IMR-90 (cell line): ENCODE measurements at regions of chr10 and their contacts with region 1.

Region 1: DNA sequence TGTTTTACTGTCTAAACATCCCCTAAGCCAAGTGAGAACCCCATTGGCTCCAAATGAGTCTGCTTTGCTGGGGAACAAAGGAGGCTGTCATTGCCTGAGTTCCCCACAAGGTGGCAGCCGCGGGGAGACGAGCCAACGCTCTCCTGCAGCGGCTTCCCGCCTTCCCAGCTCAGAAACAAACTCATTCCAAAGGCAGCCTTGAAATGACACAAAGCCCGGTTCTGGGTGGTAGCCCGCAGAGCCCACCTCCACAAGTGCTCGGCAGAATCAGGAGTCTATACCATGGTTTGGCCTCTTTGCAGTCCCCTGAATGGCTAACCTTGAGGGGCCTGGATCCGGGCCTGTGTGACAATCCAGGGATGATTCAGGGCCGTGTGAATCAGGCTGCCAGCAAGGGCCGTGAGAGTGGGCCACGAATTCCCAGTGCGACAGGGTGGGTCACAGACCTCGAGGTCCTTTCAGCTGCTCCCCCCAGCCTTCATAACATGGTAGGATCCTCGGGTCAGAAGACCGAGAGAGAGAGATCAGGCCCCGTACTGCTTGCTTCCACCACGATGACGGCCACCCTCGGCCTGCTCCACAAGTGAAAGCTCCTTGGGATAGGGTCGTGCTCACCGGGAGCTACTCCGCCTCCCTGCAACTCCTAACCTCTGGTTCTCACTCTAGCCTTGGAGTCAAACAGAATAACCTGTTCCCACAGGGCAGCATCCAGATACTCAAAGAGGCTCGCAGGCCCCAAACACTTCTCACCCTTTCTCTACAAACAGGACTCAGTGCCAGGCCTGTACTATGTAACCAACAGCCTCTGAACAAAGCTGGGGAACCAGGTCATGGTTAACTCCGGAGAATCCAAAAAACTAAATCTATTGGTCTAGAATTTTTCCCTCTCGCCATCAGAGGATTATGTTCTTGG is 79.6 kb downstream of the DLG5 start:
- DNase-seq: peak; percentile 66
- ATAC-seq: peak; percentile 88
- H3K4me3 ChIP-seq: no peak overlapping the region
- H3K27ac ChIP-seq: no peak overlapping the region; the same call in 1 of the 2 replicates
- H3K4me1 ChIP-seq: peaks cover 20% of the 10 kb centered on the region
- H3K27me3 ChIP-seq: no peaks in the 10 kb centered on the region
- CTCF ChIP-seq: peak; percentile 89
- POLR2A ChIP-seq: no peak
- RAD21 ChIP-seq: peak; percentile 90

Region 2: DNA sequence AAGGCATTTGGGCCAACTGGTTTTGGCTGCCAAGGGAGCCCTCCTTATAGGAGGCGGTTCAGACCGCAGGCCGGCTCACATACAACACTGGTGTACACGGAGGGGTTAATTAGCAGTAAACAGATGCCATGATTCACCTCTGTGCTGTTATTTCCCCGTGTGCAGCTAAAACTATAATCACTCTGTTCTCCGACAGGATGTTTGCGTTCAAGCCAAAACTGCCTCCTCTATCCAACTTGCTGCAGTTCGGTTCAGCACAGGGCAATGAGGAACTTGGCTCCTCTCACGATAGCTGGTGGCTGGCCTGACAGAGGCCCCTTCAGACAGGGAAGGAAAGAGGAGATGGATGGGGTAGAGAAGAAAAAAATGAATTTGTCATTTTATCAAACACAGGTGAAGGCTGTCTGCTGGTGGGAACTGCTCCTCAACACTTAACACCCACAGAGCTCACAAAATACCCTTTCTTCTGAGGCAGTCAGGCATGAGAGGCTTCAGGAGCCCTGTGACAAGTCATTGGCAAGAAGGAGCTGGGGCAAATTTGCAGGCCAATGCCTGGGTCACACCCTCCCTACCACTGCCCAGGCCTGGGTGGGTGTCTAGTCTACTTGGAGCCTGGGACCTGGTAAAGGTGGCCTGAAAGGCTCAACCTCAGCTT is 233.4 kb before region 1 on chr10:
- CTCF ChIA-PET with region 1: interaction called, 10 read pairs
- POLR2A ChIA-PET with region 1: no interaction called
- dilution Hi-C with region 1: no loop called
- in situ Hi-C with region 1: no loop called
- intact Hi-C with region 1: no loop called
- DNase-seq: no peak
- ATAC-seq: peak; percentile 22
- H3K4me3 ChIP-seq: no peak overlapping the region
- H3K27ac ChIP-seq: no peak overlapping the region
- H3K4me1 ChIP-seq: peaks cover 3% of the 10 kb centered on the region
- H3K27me3 ChIP-seq: no peaks in the 10 kb centered on the region
- CTCF ChIP-seq: no peak
- POLR2A ChIP-seq: no peak
- RAD21 ChIP-seq: no peak

Region 3: DNA sequence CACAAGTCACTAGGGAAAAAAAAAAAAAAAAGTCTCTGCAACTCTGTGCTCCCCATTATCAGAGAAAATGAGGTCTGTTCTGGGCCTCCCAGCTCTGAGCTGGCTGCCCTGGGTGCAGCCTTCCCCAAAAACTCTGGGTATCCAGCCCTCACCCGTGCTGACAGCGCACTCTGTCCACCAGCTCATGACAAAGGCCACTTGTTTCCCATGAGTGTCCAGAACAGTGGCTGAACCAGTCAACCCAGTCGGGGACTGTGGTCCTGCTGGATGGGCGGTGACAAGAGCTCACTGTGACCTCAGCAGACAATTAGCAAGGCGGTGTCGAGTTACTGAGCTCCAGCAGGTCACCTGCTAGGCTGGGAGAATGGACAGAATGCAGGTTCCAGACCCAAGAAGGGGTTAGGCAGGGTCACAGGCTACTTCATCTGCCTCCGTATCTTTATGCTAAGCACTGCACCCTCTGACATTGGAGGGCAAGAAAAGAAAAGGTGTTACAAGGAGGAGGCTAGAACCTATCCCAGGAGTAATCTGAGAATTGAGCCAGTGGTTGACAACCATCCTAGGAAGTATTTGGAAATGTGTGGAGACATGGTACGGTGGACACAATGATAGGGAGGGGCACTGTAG is 42.4 kb after region 1 on chr10:
- CTCF ChIA-PET with region 1: no interaction called
- POLR2A ChIA-PET with region 1: no interaction called
- dilution Hi-C with region 1: no loop called
- in situ Hi-C with region 1: no loop called
- intact Hi-C with region 1: loop called (anchors 5 kb)
- DNase-seq: no peak
- ATAC-seq: no peak
- H3K4me3 ChIP-seq: no peak overlapping the region
- H3K27ac ChIP-seq: no peak overlapping the region
- H3K4me1 ChIP-seq: peaks cover 17% of the 10 kb centered on the region
- H3K27me3 ChIP-seq: no peaks in the 10 kb centered on the region
- CTCF ChIP-seq: no peak
- POLR2A ChIP-seq: no peak
- RAD21 ChIP-seq: no peak

Region 4: DNA sequence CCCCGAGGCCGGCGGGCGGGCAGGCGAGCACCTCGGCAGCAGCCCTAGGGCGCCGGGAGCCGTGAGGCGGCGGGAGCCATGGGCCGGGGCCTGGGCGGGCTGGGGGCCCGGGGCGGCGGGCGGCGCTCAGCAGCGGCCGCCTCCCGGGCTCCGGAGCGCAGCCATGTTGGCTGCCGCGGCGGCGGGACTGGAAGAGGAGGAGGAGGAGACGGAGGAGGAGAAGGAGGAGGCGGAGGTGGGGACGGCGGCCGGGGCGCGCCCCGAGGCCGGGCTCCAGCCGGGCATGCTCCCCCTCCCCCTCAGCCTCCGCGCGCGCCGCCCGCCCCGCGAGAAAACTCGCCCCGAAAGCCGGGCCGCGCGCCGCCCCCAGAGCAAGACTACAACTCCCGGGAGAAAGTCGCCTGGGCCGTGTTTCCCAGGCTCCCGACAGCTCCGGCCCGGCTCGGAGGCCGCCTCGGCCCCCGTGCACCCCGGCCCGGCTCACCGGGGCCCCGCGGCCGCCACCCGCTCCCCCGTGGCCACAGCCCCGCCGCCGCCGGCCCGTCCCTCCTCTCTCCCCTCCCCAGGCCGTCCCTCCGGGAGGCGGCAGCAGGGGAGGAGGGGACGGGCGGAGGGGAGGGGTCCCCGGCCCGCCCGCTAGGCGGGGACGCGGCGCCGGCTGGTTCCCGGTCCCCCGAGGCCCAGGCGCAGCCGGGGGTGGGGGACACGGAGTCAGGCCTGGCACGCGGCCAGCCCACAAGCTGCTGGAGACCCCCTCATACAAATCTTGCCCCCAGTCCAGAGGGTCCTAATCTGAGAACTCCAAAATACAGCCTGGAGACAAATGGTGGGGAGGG is 79.8 kb after region 1 on chr10 and contains the start of gene DLG5:
- CTCF ChIA-PET with region 1: no interaction called
- POLR2A ChIA-PET with region 1: no interaction called
- dilution Hi-C with region 1: no loop called
- in situ Hi-C with region 1: no loop called
- intact Hi-C with region 1: loop called (anchors 2 kb)
- DNase-seq: peak; percentile 52
- ATAC-seq: peak; percentile 94
- H3K4me3 ChIP-seq: peak within 1 kb of the TSS; percentile 99
- H3K27ac ChIP-seq: peak within 1 kb of the TSS; percentile 76
- H3K4me1 ChIP-seq: peaks cover 7% of the 10 kb centered on the region
- H3K27me3 ChIP-seq: no peaks in the 10 kb centered on the region
- CTCF ChIP-seq: no peak
- POLR2A ChIP-seq: 0 out of 2 replicates have a peak, but pooled peaks have one; percentile 32
- RAD21 ChIP-seq: no peak
- total RNA-seq, gene DLG5: 12.7 and 14.7 TPM in 2 replicates

Region 5: DNA sequence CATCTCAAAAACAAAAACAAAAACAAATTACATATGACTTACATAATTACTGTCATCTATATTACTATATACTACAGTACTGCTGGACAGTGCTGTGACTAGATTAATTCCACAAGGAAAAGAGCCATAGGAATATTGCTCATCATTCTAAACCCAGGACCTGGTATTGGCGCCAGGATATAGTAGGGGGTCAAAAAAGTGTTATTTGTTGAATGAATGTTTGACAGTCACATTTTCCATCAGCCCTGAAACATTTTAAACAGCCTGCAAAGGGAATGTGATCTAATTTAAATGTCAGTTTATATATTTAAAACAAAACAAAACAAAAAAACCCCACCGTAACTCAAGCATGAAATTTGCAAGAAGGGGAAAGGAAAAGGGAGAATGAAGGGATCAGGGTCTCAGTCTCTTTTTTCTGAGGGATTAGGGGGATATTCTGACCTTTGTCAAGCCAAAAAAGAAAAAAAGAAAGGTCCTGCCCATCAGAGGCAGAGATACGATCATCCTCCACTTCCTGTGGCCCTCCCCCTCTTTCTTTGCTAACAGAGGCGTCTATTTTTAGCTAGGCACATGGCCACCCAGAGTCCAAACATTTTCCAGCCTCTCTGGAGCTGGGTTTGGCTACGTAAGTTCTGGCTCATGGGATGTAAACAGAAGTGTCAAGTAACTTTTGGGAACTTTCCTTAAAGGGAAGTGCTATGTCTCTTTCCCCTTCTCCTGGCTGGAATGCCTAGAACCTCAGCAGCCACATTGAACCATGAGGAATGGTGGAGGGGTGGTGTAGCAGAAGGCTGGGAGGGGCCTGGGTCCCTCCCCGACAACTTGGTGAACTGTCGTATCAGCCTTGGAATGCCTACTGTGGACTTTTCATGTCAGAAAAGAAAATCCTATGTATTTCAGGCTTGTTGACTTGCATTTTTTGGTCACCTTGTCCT is 124.2 kb after region 1 on chr10:
- CTCF ChIA-PET with region 1: interaction called, 3 read pairs
- POLR2A ChIA-PET with region 1: no interaction called
- dilution Hi-C with region 1: no loop called
- in situ Hi-C with region 1: loop called (anchors 5 kb)
- intact Hi-C with region 1: loop called (anchors 1 kb)
- DNase-seq: peak; percentile 98
- ATAC-seq: peak; percentile 91
- H3K4me3 ChIP-seq: peak overlapping the region; percentile 23; the same call in 1 of the 2 replicates
- H3K27ac ChIP-seq: peak overlapping the region; percentile 91
- H3K4me1 ChIP-seq: peaks cover 3% of the 10 kb centered on the region; the same call in 1 of the 2 replicates
- H3K27me3 ChIP-seq: no peaks in the 10 kb centered on the region
- CTCF ChIP-seq: no peak
- POLR2A ChIP-seq: no peak
- RAD21 ChIP-seq: peak; percentile 11; the same call in 1 of the 2 replicates

Region 6: DNA sequence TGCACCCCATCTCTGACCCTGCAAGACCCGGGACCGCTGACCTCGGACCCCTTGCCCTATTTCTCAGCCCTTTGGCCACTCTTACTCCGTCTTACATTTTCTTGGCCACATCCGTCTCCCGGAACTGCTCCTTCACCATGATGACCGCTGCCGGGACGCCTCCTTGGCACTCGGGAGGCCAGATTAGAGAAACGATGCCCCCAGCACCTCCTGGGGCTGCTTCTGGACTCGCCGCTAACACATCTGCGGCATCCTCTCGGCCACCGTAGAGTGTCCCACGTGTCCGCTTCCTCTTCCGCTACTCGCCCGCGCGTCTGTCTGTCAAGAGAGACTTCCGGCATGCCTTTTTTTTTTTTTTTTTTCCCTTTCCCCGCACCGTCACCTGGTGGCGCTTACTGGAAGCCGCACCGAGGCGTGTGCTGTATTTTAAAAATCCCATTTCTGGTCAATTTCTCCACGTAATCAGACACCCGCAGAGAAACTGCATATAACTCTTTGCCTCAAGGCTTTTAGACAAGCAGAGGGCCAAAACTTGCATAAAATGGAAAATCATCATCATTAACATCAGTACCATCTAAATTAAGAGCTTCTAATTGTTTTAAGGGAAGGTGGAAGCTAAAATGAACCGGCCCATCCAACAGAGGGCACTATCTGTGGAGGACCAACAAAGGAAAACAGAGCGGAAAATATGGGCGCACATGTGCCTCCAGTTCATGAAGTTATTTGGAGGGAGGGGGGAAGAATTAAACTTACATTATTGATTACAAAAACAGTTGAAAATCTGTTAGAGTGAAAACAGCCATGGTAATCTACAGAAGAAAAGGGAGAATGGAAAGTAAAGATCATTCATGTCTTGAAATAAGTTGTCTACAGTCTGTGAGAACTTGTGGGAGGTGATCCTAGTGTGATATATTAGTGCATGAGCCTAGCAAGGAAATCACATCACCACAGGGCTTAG is 182.6 kb after region 1 on chr10 and contains the start of gene POLR3A:
- CTCF ChIA-PET with region 1: no interaction called
- POLR2A ChIA-PET with region 1: no interaction called
- dilution Hi-C with region 1: no loop called
- in situ Hi-C with region 1: no loop called
- intact Hi-C with region 1: loop called (anchors 2 kb)
- DNase-seq: peak; percentile 99
- ATAC-seq: peak; percentile 59
- H3K4me3 ChIP-seq: peak within 1 kb of the TSS; percentile 90
- H3K27ac ChIP-seq: peak within 1 kb of the TSS; percentile 92
- H3K4me1 ChIP-seq: peaks cover 11% of the 10 kb centered on the region
- H3K27me3 ChIP-seq: no peaks in the 10 kb centered on the region
- CTCF ChIP-seq: peak; percentile 72
- POLR2A ChIP-seq: no peak
- RAD21 ChIP-seq: peak; percentile 48
- total RNA-seq, gene POLR3A: 21.4 and 24.4 TPM in 2 replicates